ENCODE measurements at regions of chr11 and their contacts with region 1.

Region 1: DNA sequence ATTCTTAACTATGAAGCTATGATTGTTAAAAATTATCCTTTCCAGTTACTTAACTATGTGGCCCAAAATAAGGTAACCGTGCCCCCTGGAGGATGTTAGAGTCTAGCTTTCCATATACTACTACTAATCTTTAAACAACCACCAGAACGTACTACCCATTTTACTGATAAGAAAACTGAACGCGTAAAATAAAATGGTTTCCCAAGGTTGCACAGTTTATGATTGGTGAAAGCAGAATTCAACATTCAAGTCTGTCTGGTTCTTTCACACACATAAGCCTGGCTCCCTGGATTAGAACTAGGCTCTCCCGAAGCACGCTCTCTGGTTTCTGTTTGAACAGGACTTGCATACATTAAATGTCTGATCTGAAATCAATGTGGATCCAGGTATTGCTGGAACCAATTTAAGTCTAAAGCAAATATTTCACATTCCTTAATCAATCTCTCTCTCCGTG is 437.9 kb upstream of the CCDC90B start:
- DNase-seq: peak; percentile 90
- H3K4me3 ChIP-seq: peak overlapping the region; percentile 32
- H3K27ac ChIP-seq: peak overlapping the region; percentile 86
- H3K4me1 ChIP-seq: peaks cover 98% of the 10 kb centered on the region
- H3K27me3 ChIP-seq: no peaks in the 10 kb centered on the region
- CTCF ChIP-seq: peak; percentile 71

Region 2: GRCh38 chr11:82900277-82901164 is 823.5 kb before region 1 on chr11 and contains the start of gene PRCP:
- CTCF ChIA-PET with region 1: no interaction called
- POLR2A ChIA-PET with region 1: no interaction called
- intact Hi-C with region 1: loop called (anchors 10 kb)
- DNase-seq: peak; percentile 89
- H3K4me3 ChIP-seq: peak within 1 kb of the TSS; percentile 65
- H3K27ac ChIP-seq: peak within 1 kb of the TSS; percentile 64
- H3K4me1 ChIP-seq: peaks cover 22% of the 10 kb centered on the region
- H3K27me3 ChIP-seq: no peaks in the 10 kb centered on the region
- CTCF ChIP-seq: 0 out of 2 replicates have a peak, but pooled peaks have one; percentile 18
- total RNA-seq, gene PRCP: 25.1 and 28.8 TPM in 2 replicates

Region 3: DNA sequence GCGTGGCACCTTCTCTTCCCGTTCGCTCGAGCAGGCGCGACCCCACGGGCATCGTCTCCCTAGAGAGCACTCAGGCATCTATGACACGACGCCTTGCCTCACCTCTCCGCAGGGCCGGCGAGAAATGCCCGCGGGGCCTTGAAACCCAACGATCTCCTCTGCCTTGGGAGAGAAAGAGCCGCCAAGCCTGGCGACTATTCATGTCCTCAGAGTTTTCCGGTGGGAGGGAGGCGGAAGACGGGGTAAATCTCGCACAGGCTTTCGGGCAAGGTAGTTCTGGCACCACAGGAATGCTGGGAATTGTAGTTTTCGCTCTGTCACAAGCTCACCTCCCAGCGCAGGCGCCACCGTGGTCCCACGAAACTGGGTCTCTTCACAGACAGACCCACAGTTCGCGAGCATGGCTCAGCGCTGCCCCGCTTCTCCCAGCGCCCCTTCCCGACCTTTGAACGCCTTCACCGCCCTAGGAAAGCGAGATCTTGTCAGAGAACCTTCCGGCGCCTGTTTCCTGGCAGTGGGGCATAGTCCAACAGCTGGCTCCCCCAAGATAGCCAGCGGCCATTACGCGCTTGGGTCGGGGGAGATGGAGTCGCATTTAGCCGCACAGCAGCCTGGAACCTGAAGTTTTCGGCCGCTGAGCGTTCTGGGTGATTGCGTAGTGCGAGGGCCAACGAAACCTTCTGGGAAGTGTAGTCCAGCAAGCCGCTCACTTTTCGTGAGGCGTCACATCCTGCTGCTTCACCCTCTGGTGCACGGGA is 438.1 kb before region 1 on chr11 and contains the start of gene CCDC90B:
- CTCF ChIA-PET with region 1: interaction called, 12 read pairs
- POLR2A ChIA-PET with region 1: no interaction called
- intact Hi-C with region 1: loop called (anchors 5 kb)
- DNase-seq: peak; percentile 100
- H3K4me3 ChIP-seq: peak within 1 kb of the TSS; percentile 71
- H3K27ac ChIP-seq: peak within 1 kb of the TSS; percentile 94
- H3K4me1 ChIP-seq: peaks cover 33% of the 10 kb centered on the region
- H3K27me3 ChIP-seq: no peaks in the 10 kb centered on the region
- CTCF ChIP-seq: peak; percentile 74; the same call in 1 of the 2 replicates
- total RNA-seq, gene CCDC90B: 51.2 and 51.6 TPM in 2 replicates

Region 4: GRCh38 chr11:83292709-83293456 is 431.2 kb before region 1 on chr11:
- CTCF ChIA-PET with region 1: interaction called, 28 read pairs
- POLR2A ChIA-PET with region 1: interaction called, 6 read pairs
- intact Hi-C with region 1: loop called (anchors 5 kb)
- DNase-seq: peak; percentile 95
- H3K4me3 ChIP-seq: peak overlapping the region; percentile 30
- H3K27ac ChIP-seq: peak overlapping the region; percentile 10
- H3K4me1 ChIP-seq: peaks cover 14% of the 10 kb centered on the region
- H3K27me3 ChIP-seq: no peaks in the 10 kb centered on the region
- CTCF ChIP-seq: peak; percentile 91

Region 5: DNA sequence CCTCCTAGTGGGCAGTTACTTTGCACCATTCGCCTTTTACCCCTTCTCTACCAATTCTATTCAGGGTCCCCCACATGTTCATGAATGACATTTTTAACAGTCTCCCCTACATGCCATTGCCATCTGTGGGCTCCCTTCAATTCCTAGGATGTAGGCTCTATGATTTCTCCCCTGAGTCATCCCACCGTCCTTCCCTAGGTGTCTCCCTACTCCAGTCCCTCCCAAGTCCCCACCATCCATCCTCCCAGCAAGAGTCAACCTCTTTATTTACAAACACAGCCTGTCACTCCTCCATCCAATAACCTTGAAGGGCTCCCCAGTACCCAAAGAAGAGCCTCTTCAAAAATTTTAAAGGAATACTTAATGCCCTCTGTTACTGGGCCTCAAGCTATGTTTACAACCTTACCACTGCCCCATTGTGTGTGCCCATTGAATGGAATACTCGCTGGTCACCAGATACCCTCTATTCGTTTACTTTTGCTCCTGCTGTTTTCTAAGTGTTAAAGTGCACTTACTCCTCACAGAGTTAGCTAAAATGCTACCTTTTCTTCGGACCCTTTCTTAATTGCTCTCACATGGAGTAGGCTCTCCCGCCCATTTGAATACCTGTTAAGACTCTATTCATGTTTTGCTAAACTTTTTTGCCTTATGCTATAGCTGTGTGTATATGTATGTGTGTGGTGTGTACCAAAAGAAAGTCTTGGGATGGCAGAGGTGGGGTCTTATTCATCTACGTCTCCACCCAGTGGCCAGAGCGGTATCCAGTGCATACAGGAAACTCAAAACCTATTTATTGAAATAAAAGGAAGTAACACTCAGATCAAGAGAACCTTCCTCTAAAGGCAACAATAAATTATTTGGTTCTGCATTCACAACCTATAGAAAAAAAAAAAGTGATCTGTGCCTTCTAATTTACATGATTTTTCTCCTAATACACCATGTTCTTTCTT is 202.1 kb before region 1 on chr11:
- CTCF ChIA-PET with region 1: no interaction called
- POLR2A ChIA-PET with region 1: no interaction called
- intact Hi-C with region 1: loop called (anchors 2 kb)
- DNase-seq: peak; percentile 65
- H3K4me3 ChIP-seq: no peak overlapping the region
- H3K27ac ChIP-seq: no peak overlapping the region
- H3K4me1 ChIP-seq: peaks cover 53% of the 10 kb centered on the region
- H3K27me3 ChIP-seq: no peaks in the 10 kb centered on the region
- CTCF ChIP-seq: peak; percentile 56

Region 6: DNA sequence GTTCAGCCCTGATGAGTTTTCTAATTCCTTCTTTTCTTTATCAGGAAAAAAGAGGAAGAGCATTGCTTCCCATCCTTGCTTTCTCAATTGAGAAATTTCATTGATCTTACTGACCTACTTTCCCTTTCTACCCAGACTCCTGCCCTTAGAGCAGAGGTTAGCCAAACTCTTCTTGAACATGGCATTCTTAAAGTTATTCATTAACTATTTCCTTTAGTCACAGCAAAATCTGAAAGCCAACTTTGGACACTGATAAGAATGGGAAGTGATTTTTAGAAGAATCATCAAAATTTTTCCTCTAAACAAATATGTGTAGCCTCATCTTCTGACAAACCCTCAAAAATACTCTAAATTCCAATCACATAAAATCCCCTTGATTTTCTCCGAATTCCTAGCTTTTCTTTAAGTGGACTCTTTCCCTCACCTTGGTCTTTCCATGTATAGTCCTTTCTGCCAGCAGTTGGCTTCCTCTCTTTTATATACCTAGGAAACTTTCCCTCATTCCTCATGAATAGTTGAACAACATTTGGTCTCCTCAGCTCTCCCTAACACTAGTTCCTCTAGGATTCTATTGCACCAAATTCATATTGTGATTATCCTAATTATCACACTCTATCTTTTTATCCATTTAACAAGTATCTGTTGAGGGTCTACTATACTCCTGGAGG is 128.9 kb after region 1 on chr11:
- CTCF ChIA-PET with region 1: no interaction called
- POLR2A ChIA-PET with region 1: no interaction called
- intact Hi-C with region 1: no loop called
- DNase-seq: no peak
- H3K4me3 ChIP-seq: no peak overlapping the region
- H3K27ac ChIP-seq: no peak overlapping the region
- H3K4me1 ChIP-seq: no peaks in the 10 kb centered on the region
- H3K27me3 ChIP-seq: peaks cover 6% of the 10 kb centered on the region
- CTCF ChIP-seq: no peak

Measured in A673 (cell line).